Posterior vena cava (tissue), 2 donors: ENCODE measurements at regions of chr1 and their contacts with region 1.

Region 1: GRCh38 chr1:71001624-71002023 is 46.0 kb downstream of the PTGER3 start:
- DNase-seq: no peak

Region 2: DNA sequence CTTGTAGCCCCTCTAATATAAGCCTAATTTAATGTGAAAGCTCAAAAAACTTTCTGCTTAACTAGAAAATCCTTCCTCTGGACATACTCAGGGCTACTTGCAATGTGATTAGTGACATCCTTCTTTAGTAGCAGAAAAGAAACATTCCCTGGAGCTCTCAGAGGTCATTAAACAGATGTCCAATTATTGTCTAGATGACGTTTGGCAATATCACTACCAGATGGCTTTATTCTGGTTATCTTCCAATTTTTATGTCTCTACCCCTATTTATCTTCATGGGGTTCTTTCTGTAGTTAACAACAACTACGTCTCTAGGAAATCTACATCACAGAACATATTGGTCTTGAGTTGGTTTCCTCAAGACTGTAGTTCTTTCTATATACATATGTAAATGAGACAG is 546.3 kb before region 1 on chr1:
- intact Hi-C with region 1: no loop called
- DNase-seq: no peak

Region 3: GRCh38 chr1:70871790-70872189 is 129.8 kb before region 1 on chr1:
- intact Hi-C with region 1: loop called in 1 of 2 experiments (anchors 2 kb)
- DNase-seq: no peak

Region 4: DNA sequence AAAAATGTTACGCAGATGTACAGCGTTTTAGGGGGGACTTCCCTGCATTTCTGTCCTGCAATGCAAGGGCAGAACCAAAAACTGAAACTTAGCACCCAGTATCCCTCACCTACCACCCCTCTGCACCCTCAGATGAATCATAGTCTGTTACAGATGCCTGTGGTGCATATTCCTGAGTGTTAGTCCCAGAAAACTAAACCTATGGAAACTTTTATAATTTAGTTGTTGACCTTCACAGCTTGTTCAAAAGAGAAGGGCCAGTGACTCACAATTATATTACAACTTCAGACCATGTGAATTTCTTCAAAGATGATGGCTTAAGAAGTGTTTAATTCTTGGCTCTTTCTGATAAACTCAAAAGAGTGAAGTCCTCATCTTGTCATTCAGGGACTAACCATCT is 40.2 kb after region 1 on chr1:
- intact Hi-C with region 1: loop called in 1 of 2 experiments (anchors 2 kb)
- DNase-seq: no peak

Region 5: GRCh38 chr1:71116729-71117128 is 115.1 kb after region 1 on chr1:
- intact Hi-C with region 1: no loop called
- DNase-seq: no peak

Region 6: GRCh38 chr1:72166426-72166825 is 1164.8 kb after region 1 on chr1:
- intact Hi-C with region 1: no loop called
- DNase-seq: no peak